Ovary (tissue), 10 donors: ENCODE measurements at regions of chr10 and their contacts with region 1.

Region 1: DNA sequence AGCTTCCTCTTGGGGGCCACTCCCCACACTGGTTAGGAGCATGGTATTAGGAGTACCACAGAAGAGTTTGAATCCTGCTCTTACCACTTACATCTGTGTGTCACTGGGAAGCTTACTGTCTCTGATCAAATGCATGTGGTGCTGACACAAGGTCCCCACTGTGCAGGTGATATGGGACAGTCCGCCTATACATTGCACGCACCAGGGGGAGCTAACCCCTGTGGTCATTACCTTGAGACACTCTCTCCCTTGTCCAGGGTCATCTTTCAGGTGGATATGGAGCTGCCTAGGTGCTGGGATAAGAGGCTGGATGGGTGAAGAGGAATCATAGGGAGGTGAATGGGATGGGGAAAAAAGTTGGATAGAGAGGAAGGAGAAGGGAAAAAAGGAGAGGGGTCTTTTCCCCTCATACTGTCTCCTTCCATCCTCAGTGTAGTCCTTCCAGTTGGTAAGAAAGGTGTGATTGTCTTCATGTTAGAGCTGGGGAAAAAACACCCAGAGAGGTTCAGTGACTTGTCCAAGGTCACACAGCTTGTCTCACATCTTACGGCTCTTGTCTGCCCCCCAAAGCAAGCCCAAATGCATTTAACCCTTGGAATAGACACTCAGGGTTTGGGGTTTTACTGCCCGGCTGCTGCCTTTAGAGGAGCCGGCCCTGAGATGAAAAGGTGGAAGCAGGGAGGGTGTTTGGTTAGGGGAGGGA is 125.9 kb downstream of the CDH23 start:
- DNase-seq: no peak
- H3K4me3 ChIP-seq: no peak overlapping the region
- H3K27ac ChIP-seq: no peak overlapping the region
- H3K4me1 ChIP-seq: peaks cover 5% of the 10 kb centered on the region
- H3K27me3 ChIP-seq: no peaks in the 10 kb centered on the region
- CTCF ChIP-seq: no peak
- EP300 ChIP-seq: no peak
- POLR2A ChIP-seq: no peak

Region 2: GRCh38 chr10:71052076-71052660 is 470.4 kb before region 1 on chr10:
- intact Hi-C with region 1: no loop called
- DNase-seq: no peak
- H3K4me3 ChIP-seq: no peak overlapping the region
- H3K27ac ChIP-seq: no peak overlapping the region
- H3K4me1 ChIP-seq: no peaks in the 10 kb centered on the region
- H3K27me3 ChIP-seq: no peaks in the 10 kb centered on the region
- CTCF ChIP-seq: no peak
- EP300 ChIP-seq: no peak
- POLR2A ChIP-seq: no peak

Region 3: DNA sequence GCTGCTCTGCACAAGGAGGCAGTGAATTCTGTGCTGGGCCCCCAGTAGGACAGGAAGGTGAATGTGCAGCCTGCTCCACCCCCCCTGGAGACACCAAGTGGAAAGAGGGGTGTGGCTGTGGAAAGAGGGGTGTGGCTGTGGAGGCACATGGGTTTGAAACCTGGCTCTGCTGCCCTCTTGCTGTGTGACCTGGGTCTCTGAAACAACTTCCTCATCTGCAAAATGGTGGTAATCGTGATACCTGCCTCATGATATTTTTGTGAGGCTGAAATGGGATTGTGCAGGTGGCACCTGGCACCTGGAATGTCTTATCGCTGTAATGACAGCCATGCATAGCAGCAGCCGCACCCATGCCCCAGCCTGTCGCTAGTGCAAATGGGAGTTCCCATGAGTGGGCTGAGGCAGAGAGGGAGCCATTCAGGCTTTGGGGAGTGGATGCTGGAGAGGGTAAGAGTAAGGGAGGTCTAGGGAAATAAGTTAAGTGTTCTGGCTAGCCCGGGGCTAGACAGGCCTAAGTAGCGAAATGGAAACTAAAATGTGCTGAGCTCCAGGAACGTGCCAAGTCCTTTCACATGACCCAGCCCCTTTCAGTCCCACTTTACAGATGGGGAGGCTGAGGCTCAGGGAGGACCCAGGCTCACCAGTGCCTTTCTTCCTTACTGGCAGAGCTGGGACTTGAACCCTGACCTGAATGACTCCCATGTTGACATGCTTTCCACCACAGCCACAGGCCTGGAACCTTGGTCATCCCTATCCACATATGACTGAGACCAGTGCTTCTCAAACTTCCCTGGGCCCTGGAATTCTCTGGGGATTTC is 162.0 kb after region 1 on chr10:
- intact Hi-C with region 1: no loop called
- DNase-seq: no peak
- H3K4me3 ChIP-seq: no peak overlapping the region
- H3K27ac ChIP-seq: no peak overlapping the region
- H3K4me1 ChIP-seq: no peaks in the 10 kb centered on the region
- H3K27me3 ChIP-seq: no peaks in the 10 kb centered on the region
- CTCF ChIP-seq: no peak
- EP300 ChIP-seq: no peak
- POLR2A ChIP-seq: no peak

Region 4: DNA sequence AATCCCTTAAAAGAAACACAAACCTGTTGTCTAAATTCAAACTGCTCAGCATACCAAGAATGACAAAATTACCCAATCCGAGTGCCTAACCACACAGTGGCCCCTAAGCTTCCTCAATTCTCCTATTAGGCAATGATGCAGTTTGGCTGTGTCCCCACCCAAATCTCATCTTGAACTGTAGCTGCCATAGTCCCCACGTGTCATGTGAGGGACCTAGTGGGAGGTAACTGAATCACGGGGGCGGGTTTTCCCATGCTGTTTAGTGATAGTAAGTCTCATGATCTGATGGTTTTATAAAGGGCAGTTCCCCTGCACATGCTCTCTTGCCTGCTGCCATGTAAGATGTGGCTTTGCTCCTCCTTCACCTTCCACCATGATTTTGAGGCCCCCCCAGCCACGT is 306.6 kb after region 1 on chr10:
- intact Hi-C with region 1: loop called in 1 of 4 experiments (anchors 5 kb)
- DNase-seq: no peak
- H3K4me3 ChIP-seq: no peak overlapping the region
- H3K27ac ChIP-seq: no peak overlapping the region
- H3K4me1 ChIP-seq: no peaks in the 10 kb centered on the region
- H3K27me3 ChIP-seq: no peaks in the 10 kb centered on the region
- CTCF ChIP-seq: no peak
- EP300 ChIP-seq: no peak
- POLR2A ChIP-seq: no peak

Region 5: GRCh38 chr10:72009411-72010081 is 487.0 kb after region 1 on chr10:
- intact Hi-C with region 1: no loop called
- DNase-seq: peak; percentile 94 to 99 (median 97)
- H3K4me3 ChIP-seq: no peak overlapping the region
- H3K27ac ChIP-seq: peak overlapping the region; percentile 64 to 88
- H3K4me1 ChIP-seq: peaks cover 50% of the 10 kb centered on the region
- H3K27me3 ChIP-seq: no peaks in the 10 kb centered on the region
- CTCF ChIP-seq: no peak
- EP300 ChIP-seq: peak; percentile 93
- POLR2A ChIP-seq: no peak